ENCODE measurements at regions of chr6 and their contacts with region 1.

Region 1: DNA sequence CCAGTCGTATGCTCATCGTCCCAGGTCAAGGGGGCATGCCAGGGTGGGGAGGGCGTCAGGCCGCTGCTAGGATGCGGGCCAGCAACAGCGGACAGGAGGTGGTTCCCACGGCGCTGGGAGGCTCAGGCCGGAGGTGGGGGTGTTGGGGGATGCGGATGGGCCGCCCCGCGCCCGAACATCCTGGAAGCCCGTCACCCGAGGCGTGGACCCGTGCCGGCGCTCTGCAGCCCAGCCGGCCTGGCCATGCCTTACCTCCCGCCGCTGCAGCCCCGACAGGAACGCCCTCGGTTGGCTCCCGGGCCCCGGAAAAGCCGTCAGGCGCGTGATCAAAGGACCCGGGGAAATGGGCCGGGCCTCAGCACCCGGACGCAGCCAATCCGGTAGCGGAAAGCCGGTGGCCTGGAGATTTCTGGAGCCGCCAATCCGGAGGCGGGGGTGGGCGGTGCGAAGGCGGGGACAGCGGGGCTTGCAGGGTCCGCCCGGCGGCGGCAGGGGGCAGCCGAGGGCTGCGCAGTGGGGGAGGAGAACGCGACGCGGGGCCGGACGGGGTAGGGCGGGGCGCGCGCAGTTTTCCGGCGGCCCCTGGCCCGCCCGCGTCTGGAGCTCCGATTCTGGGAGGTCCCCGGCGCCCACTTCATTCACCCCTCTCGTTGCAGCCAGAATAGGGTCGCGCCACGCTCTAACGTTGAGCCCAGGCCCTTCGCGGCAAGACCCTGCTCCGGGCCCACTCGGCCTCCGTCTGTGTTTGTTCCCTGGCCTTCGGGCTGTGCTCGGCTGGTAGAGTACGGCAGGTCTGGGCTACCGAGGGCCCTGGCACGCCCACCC is at the start of gene SMIM29:
- DNase-seq: peak; percentile 95 to 97
- H3K4me3 ChIP-seq: peak within 1 kb of the TSS; percentile 85
- H3K4me3 Mint-ChIP-seq: peak within 1 kb of the TSS; percentile 87
- H3K27ac Mint-ChIP-seq: peak within 1 kb of the TSS; percentile 89
- H3K4me1 ChIP-seq: peaks cover 8% of the 10 kb centered on the region; the same call in 1 of the 2 replicates
- H3K4me1 Mint-ChIP-seq: peaks cover 7% of the 10 kb centered on the region
- H3K27me3 ChIP-seq: no peaks in the 10 kb centered on the region
- H3K27me3 Mint-ChIP-seq: no peaks in the 10 kb centered on the region
- CTCF ChIP-seq: peak; percentile 77 to 95
- total RNA-seq, gene SMIM29: 14.3 and 16.0 TPM in 2 replicates

Region 2: GRCh38 chr6:34143884-34144580 is 104.9 kb before region 1 on chr6:
- CTCF ChIA-PET with region 1: no interaction called
- POLR2A ChIA-PET with region 1: no interaction called
- intact Hi-C with region 1: no loop called
- DNase-seq: peak in 1 of 2 experiments; percentile 63
- H3K4me3 ChIP-seq: no peak overlapping the region
- H3K4me3 Mint-ChIP-seq: no peak overlapping the region
- H3K27ac Mint-ChIP-seq: no peak overlapping the region
- H3K4me1 ChIP-seq: peaks cover 10% of the 10 kb centered on the region
- H3K4me1 Mint-ChIP-seq: no peaks in the 10 kb centered on the region
- H3K27me3 ChIP-seq: peaks cover 1% of the 10 kb centered on the region
- H3K27me3 Mint-ChIP-seq: peaks cover 31% of the 10 kb centered on the region
- CTCF ChIP-seq: peak; percentile 25 to 30

Region 3: DNA sequence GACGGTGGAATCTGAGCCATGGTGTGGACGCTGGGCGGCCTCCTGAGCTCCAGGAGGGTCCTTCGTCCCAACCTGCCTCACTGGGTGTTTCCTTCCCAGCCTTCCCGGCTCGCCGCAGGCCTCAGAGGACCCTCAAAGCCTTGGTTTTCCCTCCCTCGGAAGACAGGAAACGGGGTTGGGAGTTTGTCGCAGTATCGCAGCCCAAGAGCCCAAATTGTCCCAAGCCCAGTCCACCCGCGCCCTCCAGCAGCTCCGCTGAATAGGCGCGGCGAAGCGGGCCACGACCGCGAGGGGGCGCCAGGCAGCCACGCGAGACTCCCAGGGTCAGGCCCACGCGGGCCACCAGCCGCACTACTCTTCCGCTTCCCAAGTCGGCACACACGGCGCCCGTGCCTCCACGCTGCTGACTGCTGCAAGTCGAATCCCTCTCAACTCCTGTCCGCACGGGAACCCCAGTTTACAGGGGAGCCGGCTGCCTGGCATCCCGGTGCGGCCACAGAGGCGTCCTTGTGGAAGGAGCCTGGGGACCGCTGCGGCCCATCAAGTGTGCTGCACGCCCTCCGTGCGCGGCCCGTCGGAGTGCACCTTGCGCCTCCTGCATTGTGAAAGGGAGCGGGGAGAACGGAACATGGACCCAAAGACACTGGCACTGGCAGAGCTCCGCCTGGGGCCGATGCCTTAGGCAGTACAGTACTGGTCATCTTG is 52.7 kb before region 1 on chr6:
- CTCF ChIA-PET with region 1: no interaction called
- POLR2A ChIA-PET with region 1: no interaction called
- intact Hi-C with region 1: loop called (anchors 5 kb)
- DNase-seq: peak; percentile 61 to 79
- H3K4me3 ChIP-seq: peak overlapping the region; percentile 38
- H3K4me3 Mint-ChIP-seq: peak overlapping the region; percentile 67
- H3K27ac Mint-ChIP-seq: no peak overlapping the region
- H3K4me1 ChIP-seq: peaks cover 4% of the 10 kb centered on the region; the same call in 1 of the 2 replicates
- H3K4me1 Mint-ChIP-seq: no peaks in the 10 kb centered on the region
- H3K27me3 ChIP-seq: no peaks in the 10 kb centered on the region
- H3K27me3 Mint-ChIP-seq: peaks cover 2% of the 10 kb centered on the region
- CTCF ChIP-seq: peak; percentile 86 to 93

Region 4: GRCh38 chr6:34602318-34603111 is 353.6 kb after region 1 on chr6:
- CTCF ChIA-PET with region 1: no interaction called
- POLR2A ChIA-PET with region 1: no interaction called
- intact Hi-C with region 1: loop called (anchors 10 kb)
- DNase-seq: peak in 1 of 2 experiments; percentile 29
- H3K4me3 ChIP-seq: no peak overlapping the region
- H3K4me3 Mint-ChIP-seq: peak overlapping the region; percentile 43
- H3K27ac Mint-ChIP-seq: peak overlapping the region; percentile 54
- H3K4me1 ChIP-seq: peaks cover 59% of the 10 kb centered on the region
- H3K4me1 Mint-ChIP-seq: peaks cover 29% of the 10 kb centered on the region
- H3K27me3 ChIP-seq: no peaks in the 10 kb centered on the region
- H3K27me3 Mint-ChIP-seq: no peaks in the 10 kb centered on the region
- CTCF ChIP-seq: no peak

Region 5: DNA sequence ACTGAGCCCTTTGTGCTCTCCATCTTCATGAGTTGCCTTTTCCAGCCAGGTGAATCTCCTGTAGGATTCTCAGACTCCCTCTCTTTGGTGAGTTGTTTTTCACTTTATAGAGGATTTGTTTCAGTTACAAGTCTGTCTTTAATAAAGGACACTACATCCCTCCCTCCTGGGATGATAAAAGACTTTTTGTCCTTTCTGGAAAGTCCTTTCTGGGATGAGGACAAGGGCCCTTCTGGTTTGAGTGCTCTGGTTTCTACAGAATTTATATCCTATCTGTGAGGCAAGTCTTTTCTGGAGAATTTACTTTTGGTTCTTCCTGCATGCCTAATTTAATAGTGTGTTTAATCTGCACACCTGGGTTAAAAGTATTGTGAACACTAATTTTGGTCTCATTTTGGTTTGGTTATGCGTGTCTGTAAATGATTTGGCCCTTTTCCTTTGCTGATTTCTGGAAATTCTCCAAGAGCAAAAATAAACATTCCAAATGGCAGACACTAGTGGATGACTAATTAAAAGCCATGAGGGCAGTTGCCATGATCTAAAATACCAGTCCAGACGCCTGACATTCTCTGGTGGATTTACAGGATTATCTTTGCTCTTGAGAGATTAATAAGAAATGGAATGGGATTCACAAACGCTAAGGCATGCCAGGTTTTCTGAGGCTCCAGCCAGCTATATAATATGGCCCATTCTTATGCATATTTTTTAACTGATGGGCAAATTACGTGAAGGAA is 847.4 kb after region 1 on chr6:
- CTCF ChIA-PET with region 1: no interaction called
- POLR2A ChIA-PET with region 1: no interaction called
- intact Hi-C with region 1: no loop called
- DNase-seq: no peak
- H3K4me3 ChIP-seq: no peak overlapping the region
- H3K4me3 Mint-ChIP-seq: no peak overlapping the region
- H3K27ac Mint-ChIP-seq: peak overlapping the region; percentile 55
- H3K4me1 ChIP-seq: peaks cover 7% of the 10 kb centered on the region; the same call in 1 of the 2 replicates
- H3K4me1 Mint-ChIP-seq: peaks cover 12% of the 10 kb centered on the region
- H3K27me3 ChIP-seq: no peaks in the 10 kb centered on the region
- H3K27me3 Mint-ChIP-seq: no peaks in the 10 kb centered on the region
- CTCF ChIP-seq: no peak